GM13977 (cell line): ENCODE measurements at regions of chr11 and their contacts with region 1.

Region 1: DNA sequence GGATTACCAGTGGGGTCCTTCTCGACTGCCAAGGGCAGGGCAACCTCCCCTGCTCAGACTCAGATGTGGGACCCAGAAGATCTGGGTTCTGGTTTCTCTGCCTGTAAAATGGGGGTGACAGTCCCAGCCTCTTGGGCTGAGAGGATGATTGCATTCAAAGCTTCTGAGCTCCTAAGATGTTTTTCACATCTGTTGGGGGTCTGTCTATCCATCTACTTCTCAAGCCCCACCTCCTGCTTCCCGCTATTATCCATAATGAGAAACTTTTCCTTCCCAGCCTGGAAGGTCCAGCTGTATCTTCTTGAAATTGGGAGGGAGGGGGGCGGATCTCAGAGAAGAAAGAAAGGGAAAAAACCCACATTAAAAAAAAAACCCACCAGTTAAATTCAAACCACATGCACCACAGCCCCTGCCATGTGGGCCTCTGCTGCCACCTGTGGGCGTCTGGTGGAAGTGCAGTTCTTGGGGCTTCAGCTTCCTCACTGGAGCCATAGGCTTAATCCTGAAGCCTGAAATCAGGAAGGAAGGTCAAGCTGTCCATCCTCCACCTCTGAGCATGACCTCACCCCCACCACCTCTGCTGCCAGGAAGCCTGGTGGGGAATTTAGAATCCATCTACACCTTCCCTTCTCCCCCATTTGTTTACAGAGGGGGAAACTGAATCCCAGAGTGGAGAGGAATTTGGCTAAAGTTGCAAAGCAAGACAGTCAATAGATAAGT is 27.3 kb downstream of the ARHGEF17 start:
- DNase-seq: peak; percentile 84
- CTCF ChIP-seq: peak; percentile 97

Region 2: DNA sequence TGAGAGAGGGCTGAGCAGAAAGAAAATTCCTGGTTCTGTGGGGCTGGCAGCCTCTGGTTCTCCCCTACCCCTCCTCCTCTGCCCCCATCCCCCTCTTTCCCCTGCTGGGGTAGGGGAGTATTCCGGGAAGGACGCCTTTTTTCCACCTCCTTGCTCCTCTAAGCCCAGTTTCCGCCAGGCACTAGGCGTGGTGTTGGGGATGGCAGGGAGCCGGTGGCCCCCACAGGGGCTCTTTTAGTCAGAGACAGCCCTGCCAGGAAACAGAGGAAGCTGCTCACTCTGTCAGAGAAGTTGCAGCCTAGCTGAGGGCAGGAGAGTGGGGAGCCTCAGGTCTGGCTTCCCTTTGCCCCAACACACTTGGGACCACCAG is 42.9 kb before region 1 on chr11:
- in situ Hi-C with region 1: loop called (anchors 5 kb)
- DNase-seq: no peak
- CTCF ChIP-seq: no peak

Region 3: GRCh38 chr11:73404048-73404447 is 68.7 kb after region 1 on chr11:
- in situ Hi-C with region 1: no loop called
- DNase-seq: no peak
- CTCF ChIP-seq: peak; percentile 36

Region 4: DNA sequence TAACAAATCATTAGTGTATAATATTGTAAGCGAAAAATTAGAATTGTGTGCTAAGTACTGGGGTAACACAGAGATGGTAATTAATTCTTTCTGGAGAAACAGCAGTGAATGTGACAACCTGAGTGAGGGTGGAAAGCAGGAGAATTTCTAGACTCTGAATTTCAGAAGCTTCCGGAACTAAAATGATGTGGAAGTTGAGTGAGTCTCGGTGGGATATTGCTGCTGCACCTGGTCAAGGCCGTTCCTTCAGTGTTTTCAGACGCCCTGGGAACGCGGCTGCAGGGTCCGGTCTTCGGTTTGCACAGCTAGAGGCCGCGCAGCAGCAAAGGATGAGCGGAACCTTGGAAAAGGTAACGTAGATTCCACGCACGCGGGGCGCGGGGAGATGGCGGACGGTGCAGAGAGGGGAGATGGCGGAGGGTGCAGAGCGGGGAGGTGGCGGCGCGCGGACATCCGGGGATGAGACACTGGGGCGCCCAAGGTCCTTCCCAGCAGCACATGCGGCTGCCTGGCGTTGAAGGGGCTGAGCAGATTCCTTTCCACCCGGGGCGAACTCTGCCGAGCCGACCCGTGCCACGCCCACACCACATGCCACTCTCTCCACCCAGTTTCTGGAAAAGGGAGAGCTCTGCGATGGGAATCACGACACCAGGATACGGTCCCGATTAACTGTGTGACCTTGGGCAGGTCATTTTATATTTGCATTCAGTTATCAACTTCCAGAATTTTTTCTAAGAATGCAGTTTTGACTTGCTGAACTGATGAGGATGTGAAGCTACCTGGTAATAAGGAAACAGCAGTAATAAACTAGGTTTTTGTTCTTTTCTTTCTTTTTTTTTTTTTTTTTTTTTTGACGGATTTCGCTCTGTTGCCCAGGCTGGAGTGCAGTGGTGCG is 452.5 kb after region 1 on chr11 and contains the start of gene MRPL48:
- in situ Hi-C with region 1: no loop called
- DNase-seq: peak; percentile 92
- CTCF ChIP-seq: no peak